Activated CD4-positive, alpha-beta T cell treated with anti-CD3 and anti-CD28 coated beads, Interleukin-2, amount 10 ng/mL, durations not matched to agents 24 days and 14 days (primary cell): ENCODE measurements at regions of chr4 and their contacts with region 1.

Region 1: GRCh38 chr4:38730830-38731646 is 51.8 kb downstream of the TLR10 start:
- DNase-seq: peak; percentile 94
- H3K4me3 Mint-ChIP-seq: no peak overlapping the region
- H3K27ac Mint-ChIP-seq: no peak overlapping the region
- H3K4me1 Mint-ChIP-seq: peaks cover 9% of the 10 kb centered on the region
- H3K27me3 Mint-ChIP-seq: peaks cover 17% of the 10 kb centered on the region

Region 2: GRCh38 chr4:37802068-37802666 is 928.9 kb before region 1 on chr4:
- intact Hi-C with region 1: loop called (anchors 10 kb)
- DNase-seq: no peak
- H3K4me3 Mint-ChIP-seq: no peak overlapping the region
- H3K27ac Mint-ChIP-seq: no peak overlapping the region
- H3K4me1 Mint-ChIP-seq: no peaks in the 10 kb centered on the region
- H3K27me3 Mint-ChIP-seq: peaks cover 18% of the 10 kb centered on the region

Region 3: GRCh38 chr4:38062088-38062893 is 668.7 kb before region 1 on chr4:
- intact Hi-C with region 1: loop called (anchors 1 kb)
- DNase-seq: peak; percentile 88
- H3K4me3 Mint-ChIP-seq: peak overlapping the region; percentile 88
- H3K27ac Mint-ChIP-seq: peak overlapping the region; percentile 69
- H3K4me1 Mint-ChIP-seq: peaks cover 12% of the 10 kb centered on the region
- H3K27me3 Mint-ChIP-seq: no peaks in the 10 kb centered on the region

Region 4: DNA sequence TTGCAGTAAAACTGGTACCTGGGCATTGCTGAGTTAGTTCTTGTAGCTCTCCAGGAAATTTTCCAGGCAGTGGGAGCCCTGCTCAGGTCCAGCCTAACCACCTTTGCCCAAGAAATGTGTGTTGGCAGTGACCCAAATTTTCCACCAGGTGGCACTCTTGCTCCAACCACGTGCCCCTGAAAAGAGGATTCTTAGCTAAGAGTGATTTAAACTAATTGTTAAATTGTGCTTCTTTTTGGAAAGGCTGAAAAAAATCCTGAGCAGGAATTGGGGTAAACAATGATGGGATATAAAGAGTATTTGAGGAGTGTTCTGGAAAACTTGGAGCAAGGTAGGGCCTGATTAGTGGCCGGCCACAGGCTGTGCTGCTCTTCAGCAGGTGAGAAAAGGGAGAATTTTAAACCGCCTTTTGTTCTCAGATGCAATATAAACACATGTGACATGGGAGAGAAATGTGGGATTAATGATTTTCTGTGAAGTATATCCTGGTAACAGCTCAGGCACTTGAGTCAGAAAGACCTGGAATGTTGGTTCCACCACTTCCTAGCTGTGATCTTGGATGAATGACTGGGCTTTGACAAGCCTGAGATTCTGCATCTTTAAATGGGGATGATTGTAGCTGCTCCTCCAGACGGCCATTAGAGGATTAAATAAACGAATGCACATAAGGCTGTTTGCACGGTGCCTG is 551.2 kb before region 1 on chr4:
- intact Hi-C with region 1: loop called (anchors 1 kb)
- DNase-seq: peak; percentile 92
- H3K4me3 Mint-ChIP-seq: no peak overlapping the region
- H3K27ac Mint-ChIP-seq: no peak overlapping the region
- H3K4me1 Mint-ChIP-seq: peaks cover 30% of the 10 kb centered on the region
- H3K27me3 Mint-ChIP-seq: peaks cover 17% of the 10 kb centered on the region

Region 5: DNA sequence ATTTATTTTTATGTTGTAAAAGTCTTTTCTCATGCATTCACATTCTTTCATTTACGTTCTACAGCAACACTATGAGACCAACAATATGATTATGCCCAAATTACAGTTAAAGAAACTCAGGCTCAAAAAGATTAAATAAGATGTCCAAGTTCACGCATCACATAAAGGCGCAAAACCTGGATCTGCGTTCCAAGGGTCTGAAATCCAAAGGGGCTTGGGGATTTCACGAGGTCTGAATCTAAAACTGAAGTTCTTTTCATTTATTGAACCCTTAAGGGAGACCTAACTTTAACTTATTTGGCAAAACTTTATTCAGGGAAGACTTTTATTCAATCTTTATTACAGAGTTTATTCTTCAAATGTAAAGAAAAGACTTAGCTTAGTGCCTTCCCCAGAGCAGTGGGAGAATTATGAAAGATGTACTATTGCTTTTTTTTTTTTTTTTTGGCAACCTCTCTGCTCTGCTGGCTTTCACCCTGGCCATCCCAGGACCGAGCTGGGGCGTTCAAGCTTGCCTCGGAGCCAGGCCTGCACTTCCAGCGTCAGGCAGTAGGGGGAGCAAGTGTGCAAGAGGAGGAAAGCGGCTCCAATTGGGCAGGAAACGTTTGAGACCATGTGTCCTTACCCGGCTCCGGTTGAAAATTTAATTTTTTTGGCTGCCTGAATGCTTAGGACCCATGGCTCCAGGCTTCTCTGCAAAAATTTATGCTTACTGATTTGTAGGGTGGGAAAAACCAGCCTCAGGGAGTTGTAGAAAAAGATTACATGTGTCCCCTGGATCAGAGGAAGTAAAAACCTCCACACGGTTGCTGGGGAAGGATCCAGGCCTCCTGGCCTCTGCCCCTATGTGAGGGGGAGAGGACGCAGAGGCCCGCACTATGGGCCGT is 411.3 kb before region 1 on chr4:
- intact Hi-C with region 1: loop called (anchors 2 kb)
- DNase-seq: peak; percentile 97
- H3K4me3 Mint-ChIP-seq: peak overlapping the region; percentile 77
- H3K27ac Mint-ChIP-seq: peak overlapping the region; percentile 81
- H3K4me1 Mint-ChIP-seq: peaks cover 29% of the 10 kb centered on the region
- H3K27me3 Mint-ChIP-seq: peaks cover 20% of the 10 kb centered on the region

Region 6: GRCh38 chr4:38675146-38676121 is 55.6 kb before region 1 on chr4:
- intact Hi-C with region 1: loop called (anchors 2 kb)
- DNase-seq: peak; percentile 94
- H3K4me3 Mint-ChIP-seq: no peak overlapping the region
- H3K27ac Mint-ChIP-seq: no peak overlapping the region
- H3K4me1 Mint-ChIP-seq: peaks cover 57% of the 10 kb centered on the region
- H3K27me3 Mint-ChIP-seq: peaks cover 9% of the 10 kb centered on the region

Region 7: GRCh38 chr4:38691251-38692008 is 39.6 kb before region 1 on chr4:
- intact Hi-C with region 1: no loop called
- DNase-seq: no peak
- H3K4me3 Mint-ChIP-seq: no peak overlapping the region
- H3K27ac Mint-ChIP-seq: no peak overlapping the region
- H3K4me1 Mint-ChIP-seq: peaks cover 11% of the 10 kb centered on the region
- H3K27me3 Mint-ChIP-seq: no peaks in the 10 kb centered on the region

Region 8: GRCh38 chr4:38768968-38769394 is 37.9 kb after region 1 on chr4:
- intact Hi-C with region 1: no loop called
- DNase-seq: no peak
- H3K4me3 Mint-ChIP-seq: no peak overlapping the region
- H3K27ac Mint-ChIP-seq: no peak overlapping the region
- H3K4me1 Mint-ChIP-seq: no peaks in the 10 kb centered on the region
- H3K27me3 Mint-ChIP-seq: peaks cover 13% of the 10 kb centered on the region